ENCODE measurements at regions of chr1 and their contacts with region 1.

Region 1: GRCh38 chr1:172727956-172728603 is 69.2 kb downstream of the FASLG start:
- DNase-seq: peak; percentile 31 to 74
- ATAC-seq: peak; percentile 94 to 100 (median 99)
- H3K4me3 ChIP-seq: no peak overlapping the region
- H3K4me3 Mint-ChIP-seq: no peak overlapping the region
- H3K27ac ChIP-seq: no peak overlapping the region
- H3K27ac Mint-ChIP-seq: no peak overlapping the region
- H3K4me1 ChIP-seq: peaks cover 16% of the 10 kb centered on the region
- H3K4me1 Mint-ChIP-seq: peaks cover 23 to 27% of the 10 kb centered on the region in 2 donors
- H3K27me3 ChIP-seq: no peaks in the 10 kb centered on the region
- H3K27me3 Mint-ChIP-seq: peaks cover 0 to 16% of the 10 kb centered on the region in 2 donors
- CTCF ChIP-seq: peak; percentile 77

Region 2: GRCh38 chr1:172609528-172609927 is 118.6 kb before region 1 on chr1:
- intact Hi-C with region 1: loop called (anchors 1 kb)
- DNase-seq: peak in 1 of 2 donors; percentile 63
- ATAC-seq: peak; percentile 76 to 95 (median 86)
- H3K4me3 ChIP-seq: no peak overlapping the region
- H3K4me3 Mint-ChIP-seq: no peak overlapping the region
- H3K27ac ChIP-seq: no peak overlapping the region
- H3K27ac Mint-ChIP-seq: peak overlapping the region; percentile 66 to 80
- H3K4me1 ChIP-seq: no peaks in the 10 kb centered on the region
- H3K4me1 Mint-ChIP-seq: peaks cover 9% of the 10 kb centered on the region in 2 donors
- H3K27me3 ChIP-seq: no peaks in the 10 kb centered on the region
- H3K27me3 Mint-ChIP-seq: no peaks in the 10 kb centered on the region
- CTCF ChIP-seq: peak; percentile 69

Region 3: DNA sequence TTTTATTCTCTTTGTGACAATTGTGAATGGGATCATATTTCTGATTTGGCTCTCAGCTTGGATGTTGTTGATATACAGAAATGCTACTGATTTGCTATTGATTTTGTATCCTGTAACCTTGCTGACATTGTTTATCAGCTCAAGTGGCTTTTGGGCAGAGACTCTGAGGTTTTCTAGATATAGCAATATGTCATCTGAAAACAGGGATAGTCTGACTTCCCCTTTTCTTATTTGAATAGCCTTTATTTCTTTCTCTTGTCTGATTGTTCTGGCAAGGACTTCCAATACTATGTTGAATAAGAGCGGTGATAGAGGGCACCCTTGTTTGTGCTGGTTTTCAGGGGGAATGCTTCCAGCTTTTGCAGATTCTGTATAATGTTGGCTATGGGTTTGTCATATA is 81.7 kb after region 1 on chr1:
- intact Hi-C with region 1: no loop called
- DNase-seq: no peak
- ATAC-seq: no peak
- H3K4me3 ChIP-seq: no peak overlapping the region
- H3K4me3 Mint-ChIP-seq: no peak overlapping the region
- H3K27ac ChIP-seq: no peak overlapping the region
- H3K27ac Mint-ChIP-seq: no peak overlapping the region
- H3K4me1 ChIP-seq: no peaks in the 10 kb centered on the region
- H3K4me1 Mint-ChIP-seq: no peaks in the 10 kb centered on the region
- H3K27me3 ChIP-seq: no peaks in the 10 kb centered on the region
- H3K27me3 Mint-ChIP-seq: no peaks in the 10 kb centered on the region
- CTCF ChIP-seq: no peak